MCF 10A (cell line): ENCODE measurements at regions of chr1 and their contacts with region 1.

Region 1: DNA sequence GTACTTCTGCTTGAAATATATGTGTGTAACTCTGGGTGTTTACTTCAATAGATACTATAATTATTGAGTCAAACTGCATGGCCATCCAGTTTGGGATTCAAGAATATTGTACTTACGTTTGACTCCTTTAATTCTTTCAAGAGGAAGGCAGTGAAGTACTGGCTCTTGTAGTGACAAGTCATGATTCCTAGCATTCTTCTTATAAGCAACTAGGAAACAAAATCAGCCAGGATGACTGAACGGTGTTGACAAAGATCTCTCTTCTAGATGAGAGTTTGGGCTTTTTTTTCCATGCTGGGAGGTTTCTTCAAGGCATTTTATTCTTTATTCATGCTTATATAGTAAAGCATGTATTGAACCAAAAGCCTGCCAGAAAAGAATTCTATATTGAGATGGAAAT is 58.3 kb downstream of the CLEC20A start:
- DNase-seq: no peak
- H3K4me3 Mint-ChIP-seq: no peak overlapping the region
- H3K27ac Mint-ChIP-seq: no peak overlapping the region
- H3K4me1 Mint-ChIP-seq: peaks cover 6% of the 10 kb centered on the region
- H3K27me3 Mint-ChIP-seq: no peaks in the 10 kb centered on the region
- CTCF ChIP-seq: no peak

Region 2: GRCh38 chr1:178417858-178418257 is 20.6 kb before region 1 on chr1:
- CTCF ChIA-PET with region 1: no interaction called
- POLR2A ChIA-PET with region 1: interaction called, 14 read pairs
- intact Hi-C with region 1: no loop called
- DNase-seq: peak; percentile 81
- H3K4me3 Mint-ChIP-seq: no peak overlapping the region
- H3K27ac Mint-ChIP-seq: peak overlapping the region; percentile 17
- H3K4me1 Mint-ChIP-seq: peaks cover 9% of the 10 kb centered on the region
- H3K27me3 Mint-ChIP-seq: no peaks in the 10 kb centered on the region
- CTCF ChIP-seq: no peak

Region 3: GRCh38 chr1:178495158-178495557 is 56.7 kb after region 1 on chr1:
- CTCF ChIA-PET with region 1: no interaction called
- POLR2A ChIA-PET with region 1: no interaction called
- intact Hi-C with region 1: no loop called
- DNase-seq: no peak
- H3K4me3 Mint-ChIP-seq: no peak overlapping the region
- H3K27ac Mint-ChIP-seq: no peak overlapping the region
- H3K4me1 Mint-ChIP-seq: no peaks in the 10 kb centered on the region
- H3K27me3 Mint-ChIP-seq: no peaks in the 10 kb centered on the region
- CTCF ChIP-seq: no peak